Activated CD4-positive, alpha-beta T cell treated with anti-CD3 and anti-CD28 coated beads, Interleukin-2, amount 10 ng/mL, durations not matched to agents 24 days and 14 days (primary cell): ENCODE measurements at regions of chr4 and their contacts with region 1.

Region 1: DNA sequence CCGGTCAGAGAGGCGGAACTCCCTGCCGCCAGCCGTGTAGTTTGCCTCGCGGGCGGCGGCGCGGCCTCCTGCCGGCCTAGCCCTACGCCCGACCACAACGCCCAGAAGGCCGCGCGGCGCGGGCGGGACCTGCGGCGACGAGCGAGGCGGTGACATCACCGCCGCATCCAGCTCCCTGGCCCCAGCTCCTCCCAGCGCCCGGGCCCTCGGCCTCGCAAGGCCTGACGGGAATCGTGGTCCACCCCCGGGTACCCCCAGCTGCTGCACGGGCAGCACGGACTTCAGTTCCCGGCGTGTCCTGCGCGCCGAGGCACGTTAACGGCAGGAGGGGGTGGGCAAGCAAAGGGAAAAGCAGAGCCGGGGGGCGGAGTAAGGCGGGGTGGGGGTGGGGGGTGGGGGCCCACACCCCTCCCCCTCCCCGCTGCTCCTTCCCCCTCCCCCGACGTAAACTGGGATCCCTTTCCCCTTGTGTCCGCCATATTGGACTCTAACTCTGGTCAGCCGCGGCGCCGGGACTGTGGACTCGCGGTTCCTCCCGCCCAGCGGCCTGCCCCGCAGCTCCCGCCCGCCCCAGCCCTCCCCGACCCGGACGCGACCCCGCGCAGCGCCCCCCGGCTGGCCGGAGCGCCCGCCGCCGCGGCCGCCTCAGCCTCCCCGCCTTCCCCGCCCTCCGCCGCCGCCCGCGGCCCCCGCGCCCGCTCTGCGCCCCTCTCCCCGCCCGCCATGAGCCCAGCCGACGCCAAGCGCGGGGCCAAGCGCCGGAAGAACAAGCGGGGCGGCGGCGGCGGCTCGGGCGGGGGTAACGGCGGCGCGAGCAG is at the start of gene FAM193A:
- DNase-seq: peak; percentile 100
- H3K4me3 Mint-ChIP-seq: peak within 1 kb of the TSS; percentile 92
- H3K27ac Mint-ChIP-seq: peak within 1 kb of the TSS; percentile 95
- H3K4me1 Mint-ChIP-seq: peaks cover 11% of the 10 kb centered on the region
- H3K27me3 Mint-ChIP-seq: no peaks in the 10 kb centered on the region
- total RNA-seq, gene FAM193A: 29.5 and 30.1 TPM in 2 replicates

Region 2: GRCh38 chr4:1712216-1713002 is 824.0 kb before region 1 on chr4 and contains the start of gene SLBP:
- intact Hi-C with region 1: loop called (anchors 2 kb)
- DNase-seq: peak; percentile 100
- H3K4me3 Mint-ChIP-seq: peak within 1 kb of the TSS; percentile 95
- H3K27ac Mint-ChIP-seq: peak within 1 kb of the TSS; percentile 98
- H3K4me1 Mint-ChIP-seq: peaks cover 49% of the 10 kb centered on the region
- H3K27me3 Mint-ChIP-seq: no peaks in the 10 kb centered on the region
- total RNA-seq, gene SLBP: 150 and 156 TPM in 2 replicates

Region 3: GRCh38 chr4:1899149-1900086 is 637.0 kb before region 1 on chr4:
- intact Hi-C with region 1: no loop called
- DNase-seq: peak; percentile 94
- H3K4me3 Mint-ChIP-seq: peak overlapping the region; percentile 28
- H3K27ac Mint-ChIP-seq: peak overlapping the region; percentile 86
- H3K4me1 Mint-ChIP-seq: peaks cover 59% of the 10 kb centered on the region
- H3K27me3 Mint-ChIP-seq: no peaks in the 10 kb centered on the region

Region 4: GRCh38 chr4:2241410-2242353 is 294.7 kb before region 1 on chr4 and contains the starts of genes HAUS3 and POLN:
- intact Hi-C with region 1: loop called (anchors 5 kb)
- DNase-seq: peak; percentile 100
- H3K4me3 Mint-ChIP-seq: peak within 1 kb of the TSS; percentile 84
- H3K27ac Mint-ChIP-seq: peak within 1 kb of the TSS; percentile 93
- H3K4me1 Mint-ChIP-seq: peaks cover 49% of the 10 kb centered on the region
- H3K27me3 Mint-ChIP-seq: peaks cover 2% of the 10 kb centered on the region
- total RNA-seq, gene HAUS3: 19.3 and 19.4 TPM in 2 replicates
- total RNA-seq, gene POLN: 1.9 and 2.3 TPM in 2 replicates

Region 5: GRCh38 chr4:2418650-2419571 is 117.5 kb before region 1 on chr4 and contains the start of gene CFAP99:
- intact Hi-C with region 1: loop called (anchors 1 kb)
- DNase-seq: peak; percentile 98
- H3K4me3 Mint-ChIP-seq: peak within 1 kb of the TSS; percentile 91
- H3K27ac Mint-ChIP-seq: peak within 1 kb of the TSS; percentile 86
- H3K4me1 Mint-ChIP-seq: peaks cover 35% of the 10 kb centered on the region
- H3K27me3 Mint-ChIP-seq: peaks cover 59% of the 10 kb centered on the region
- total RNA-seq, gene CFAP99: not detected in 2 replicates

Region 6: GRCh38 chr4:2570551-2571222 is 34.3 kb after region 1 on chr4:
- intact Hi-C with region 1: loop called (anchors 2 kb)
- DNase-seq: peak; percentile 91
- H3K4me3 Mint-ChIP-seq: peak overlapping the region; percentile 46
- H3K27ac Mint-ChIP-seq: peak overlapping the region; percentile 82
- H3K4me1 Mint-ChIP-seq: peaks cover 40% of the 10 kb centered on the region
- H3K27me3 Mint-ChIP-seq: no peaks in the 10 kb centered on the region

Region 7: GRCh38 chr4:2843263-2843940 is 307.0 kb after region 1 on chr4 and contains the start of gene ADD1:
- intact Hi-C with region 1: loop called (anchors 10 kb)
- DNase-seq: peak; percentile 100
- H3K4me3 Mint-ChIP-seq: peak within 1 kb of the TSS; percentile 91
- H3K27ac Mint-ChIP-seq: peak within 1 kb of the TSS; percentile 92
- H3K4me1 Mint-ChIP-seq: peaks cover 41% of the 10 kb centered on the region
- H3K27me3 Mint-ChIP-seq: no peaks in the 10 kb centered on the region
- total RNA-seq, gene ADD1: 187 and 198 TPM in 2 replicates